Calu3 (cell line): ENCODE measurements at regions of chr12 and their contacts with region 1.

Region 1: GRCh38 chr12:85866986-85867776 is 6.9 kb upstream of the NTS start:
- DNase-seq: peak; percentile 63
- H3K4me3 Mint-ChIP-seq: no peak overlapping the region
- H3K27ac Mint-ChIP-seq: no peak overlapping the region
- H3K4me1 Mint-ChIP-seq: peaks cover 42% of the 10 kb centered on the region
- H3K27me3 Mint-ChIP-seq: no peaks in the 10 kb centered on the region
- CTCF ChIP-seq: peak; percentile 87

Region 2: GRCh38 chr12:85468356-85469157 is 398.6 kb before region 1 on chr12:
- CTCF ChIA-PET with region 1: interaction called, 11 read pairs
- intact Hi-C with region 1: loop called (anchors 1 kb)
- DNase-seq: peak; percentile 70
- H3K4me3 Mint-ChIP-seq: peak overlapping the region; percentile 71
- H3K27ac Mint-ChIP-seq: peak overlapping the region; percentile 79
- H3K4me1 Mint-ChIP-seq: peaks cover 47% of the 10 kb centered on the region
- H3K27me3 Mint-ChIP-seq: no peaks in the 10 kb centered on the region
- CTCF ChIP-seq: peak; percentile 55

Region 3: DNA sequence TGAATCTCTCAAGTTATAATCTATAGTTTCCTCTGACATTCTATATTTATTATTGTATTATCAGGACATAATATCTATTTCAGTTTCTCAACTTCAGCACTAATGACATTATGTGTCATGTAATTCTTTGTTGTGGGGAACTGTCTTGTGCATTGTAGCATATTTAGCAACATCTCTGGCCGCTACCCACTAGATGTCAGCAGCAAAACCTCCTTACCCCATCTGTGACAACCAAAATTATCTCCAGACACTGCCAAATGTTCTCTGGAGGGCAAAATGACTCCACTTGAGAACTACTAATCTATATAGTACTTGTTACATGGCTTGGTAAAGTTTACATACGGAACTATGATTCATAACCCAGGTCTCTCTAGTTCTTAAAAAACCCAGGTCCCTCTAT is 141.2 kb before region 1 on chr12:
- CTCF ChIA-PET with region 1: no interaction called
- intact Hi-C with region 1: loop called (anchors 5 kb)
- DNase-seq: no peak
- H3K4me3 Mint-ChIP-seq: no peak overlapping the region
- H3K27ac Mint-ChIP-seq: no peak overlapping the region
- H3K4me1 Mint-ChIP-seq: no peaks in the 10 kb centered on the region
- H3K27me3 Mint-ChIP-seq: no peaks in the 10 kb centered on the region
- CTCF ChIP-seq: no peak

Region 4: GRCh38 chr12:85814116-85814515 is 53.1 kb before region 1 on chr12:
- CTCF ChIA-PET with region 1: interaction called, 5 read pairs
- intact Hi-C with region 1: loop called (anchors 1 kb)
- DNase-seq: no peak
- H3K4me3 Mint-ChIP-seq: no peak overlapping the region
- H3K27ac Mint-ChIP-seq: peak overlapping the region; percentile 42
- H3K4me1 Mint-ChIP-seq: peaks cover 16% of the 10 kb centered on the region
- H3K27me3 Mint-ChIP-seq: no peaks in the 10 kb centered on the region
- CTCF ChIP-seq: no peak

Region 5: DNA sequence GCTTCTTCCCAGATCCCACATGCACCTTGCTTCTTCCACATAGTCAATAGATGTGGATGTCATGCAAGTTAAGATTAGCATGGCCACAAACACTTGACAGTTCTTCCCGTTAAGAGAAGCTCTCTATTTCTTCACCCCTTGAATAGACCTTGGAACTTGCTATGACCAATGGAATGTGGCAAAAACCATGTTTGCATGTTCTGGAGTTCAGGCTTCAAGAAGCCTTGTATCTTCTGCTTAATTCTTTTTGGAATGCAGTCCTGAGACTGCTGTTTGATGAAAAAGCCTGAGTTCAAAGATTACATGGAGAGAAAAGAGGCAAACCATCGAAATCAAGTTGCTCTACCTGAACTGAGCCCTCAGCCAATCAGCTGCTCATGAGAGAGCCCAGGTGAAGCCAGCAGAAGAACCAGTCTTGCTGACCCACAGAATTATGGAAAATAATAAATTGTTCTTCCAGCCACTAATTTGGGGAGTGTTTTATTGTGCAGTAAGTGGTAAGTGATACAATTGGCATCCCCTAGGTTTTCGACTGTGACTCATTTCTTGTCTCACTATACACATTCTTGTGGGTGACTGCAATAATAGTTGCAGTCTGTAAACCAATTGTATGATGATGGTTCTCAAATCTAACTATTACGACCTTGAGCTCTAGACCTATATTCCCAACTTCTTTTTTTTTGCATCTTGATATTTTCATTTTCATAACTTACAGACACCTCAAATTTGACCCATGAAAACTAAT is 43.6 kb before region 1 on chr12:
- CTCF ChIA-PET with region 1: interaction called, 10 read pairs
- intact Hi-C with region 1: loop called (anchors 2 kb)
- DNase-seq: peak; percentile 24
- H3K4me3 Mint-ChIP-seq: peak overlapping the region; percentile 32
- H3K27ac Mint-ChIP-seq: peak overlapping the region; percentile 71
- H3K4me1 Mint-ChIP-seq: peaks cover 63% of the 10 kb centered on the region
- H3K27me3 Mint-ChIP-seq: no peaks in the 10 kb centered on the region
- CTCF ChIP-seq: no peak